A549 (cell line): ENCODE measurements at regions of chr10 and their contacts with region 1.

Region 1: GRCh38 chr10:62038609-62039190 is 137.2 kb downstream of the ARID5B start:
- DNase-seq: peak; percentile 74 to 79
- ATAC-seq: peak; percentile 79 to 90; a peak in 5 of 6 replicates
- H3K4me3 ChIP-seq: no peak overlapping the region
- H3K27ac ChIP-seq: peak overlapping the region; percentile 51 to 70
- H3K4me1 ChIP-seq: peaks cover 30% of the 10 kb centered on the region
- CTCF ChIP-seq: peak; percentile 86
- EP300 ChIP-seq: no peak
- POLR2A ChIP-seq: no peak
- RAD21 ChIP-seq: peak; percentile 96 to 98

Region 2: GRCh38 chr10:61812052-61812721 is 226.5 kb before region 1 on chr10:
- CTCF ChIA-PET with region 1: no interaction called
- POLR2A ChIA-PET with region 1: no interaction called
- DNase-seq: no peak
- ATAC-seq: no peak
- H3K4me3 ChIP-seq: no peak overlapping the region
- H3K27ac ChIP-seq: no peak overlapping the region
- H3K4me1 ChIP-seq: no peaks in the 10 kb centered on the region
- CTCF ChIP-seq: no peak
- EP300 ChIP-seq: no peak
- POLR2A ChIP-seq: no peak
- RAD21 ChIP-seq: no peak

Region 3: DNA sequence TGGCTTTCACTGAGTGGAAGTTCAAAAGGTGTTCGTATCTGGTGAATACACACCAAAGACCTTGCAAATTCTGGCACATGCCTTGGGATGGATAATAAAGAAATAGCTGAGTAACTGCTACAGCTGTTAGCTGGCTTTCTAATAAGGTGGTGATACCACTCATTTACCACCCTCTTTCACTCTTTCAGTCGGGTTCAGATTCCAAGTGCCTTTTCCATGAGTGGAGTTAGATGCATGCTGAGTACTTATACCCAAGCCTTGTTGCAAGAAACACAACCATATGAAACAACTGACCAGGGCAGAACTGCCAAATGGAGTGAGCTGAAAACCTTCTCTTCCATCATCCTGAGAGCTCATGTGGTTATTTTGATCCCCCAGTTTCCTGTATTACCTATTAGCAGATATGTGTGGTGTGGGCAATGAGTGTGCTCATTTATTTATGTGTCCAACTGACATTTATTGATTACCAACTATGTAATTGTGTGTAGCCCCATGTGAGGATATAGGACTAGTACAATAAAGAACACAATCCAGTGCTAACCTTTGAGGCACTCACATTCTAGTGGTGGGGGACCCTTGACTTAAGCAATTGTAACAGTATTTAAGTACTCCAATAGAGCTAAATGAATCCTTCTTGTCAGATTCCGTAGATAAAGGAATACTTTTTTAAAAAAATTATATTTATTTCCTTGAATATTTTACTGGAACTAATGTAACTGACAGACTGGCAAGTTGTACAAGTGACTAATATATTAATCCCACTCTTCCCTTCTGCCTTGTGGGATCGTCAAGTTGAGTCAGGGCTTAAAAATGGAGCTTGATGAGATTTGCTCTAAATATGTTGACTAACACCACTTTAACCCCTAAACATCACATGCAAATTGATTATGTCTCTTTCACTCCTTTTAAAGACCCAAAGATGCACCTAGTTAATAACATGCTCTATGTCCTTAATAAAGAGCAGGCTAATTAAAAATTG is 12.5 kb before region 1 on chr10:
- CTCF ChIA-PET with region 1: interaction called, 32 read pairs
- POLR2A ChIA-PET with region 1: interaction called, 7 read pairs
- DNase-seq: no peak
- ATAC-seq: no peak
- H3K4me3 ChIP-seq: no peak overlapping the region
- H3K27ac ChIP-seq: no peak overlapping the region
- H3K4me1 ChIP-seq: peaks cover 8% of the 10 kb centered on the region; the same call in 2 of the 3 replicates
- CTCF ChIP-seq: no peak
- EP300 ChIP-seq: no peak
- POLR2A ChIP-seq: no peak
- RAD21 ChIP-seq: no peak

Region 4: DNA sequence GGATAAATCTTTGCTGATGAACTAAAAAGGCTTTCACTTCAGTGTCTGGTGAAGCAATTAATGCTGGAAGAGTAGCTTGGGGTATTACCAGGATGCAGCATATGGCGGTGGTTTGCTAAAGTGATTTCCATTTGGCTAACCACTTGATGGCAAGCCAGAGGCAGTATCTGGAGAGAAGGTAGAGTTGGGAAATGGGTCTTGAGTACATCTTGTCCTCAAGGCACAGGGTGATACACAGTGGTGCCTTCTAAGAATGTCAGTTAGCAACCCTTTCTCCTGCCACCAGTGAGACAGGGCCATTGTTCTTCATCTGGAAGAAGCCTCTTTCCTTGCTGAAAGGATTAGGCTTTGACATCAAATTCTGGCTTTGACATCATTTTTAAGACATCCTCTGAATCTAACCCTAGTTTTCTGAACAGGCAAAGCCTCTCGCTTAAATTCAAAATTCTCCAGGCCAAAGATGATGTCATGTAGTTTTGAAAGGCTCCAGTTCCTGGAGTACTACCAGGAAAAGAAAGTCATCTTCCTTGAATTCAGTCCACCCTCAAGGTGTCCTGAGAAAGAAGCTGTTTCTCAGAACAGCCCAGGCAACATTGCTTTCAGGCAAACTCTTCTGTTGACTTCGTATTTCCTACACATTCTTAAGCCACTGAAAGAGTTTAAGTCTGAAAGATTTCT is 25.2 kb after region 1 on chr10:
- CTCF ChIA-PET with region 1: interaction called, 10 read pairs
- POLR2A ChIA-PET with region 1: no interaction called
- DNase-seq: no peak
- ATAC-seq: no peak
- H3K4me3 ChIP-seq: no peak overlapping the region
- H3K27ac ChIP-seq: no peak overlapping the region; a peak in 1 of 6 replicates
- H3K4me1 ChIP-seq: peaks cover 11% of the 10 kb centered on the region; the same call in 1 of the 3 replicates
- CTCF ChIP-seq: no peak
- EP300 ChIP-seq: no peak
- POLR2A ChIP-seq: no peak
- RAD21 ChIP-seq: no peak

Region 5: GRCh38 chr10:62103857-62104256 is 65.2 kb after region 1 on chr10:
- CTCF ChIA-PET with region 1: interaction called, 13 read pairs
- POLR2A ChIA-PET with region 1: no interaction called
- DNase-seq: no peak
- ATAC-seq: no peak
- H3K4me3 ChIP-seq: no peak overlapping the region
- H3K27ac ChIP-seq: no peak overlapping the region
- H3K4me1 ChIP-seq: 0 out of 3 replicates have a peak, but pooled peaks cover under 1% of the 10 kb centered on the region
- CTCF ChIP-seq: no peak
- EP300 ChIP-seq: no peak
- POLR2A ChIP-seq: no peak
- RAD21 ChIP-seq: no peak

Region 6: DNA sequence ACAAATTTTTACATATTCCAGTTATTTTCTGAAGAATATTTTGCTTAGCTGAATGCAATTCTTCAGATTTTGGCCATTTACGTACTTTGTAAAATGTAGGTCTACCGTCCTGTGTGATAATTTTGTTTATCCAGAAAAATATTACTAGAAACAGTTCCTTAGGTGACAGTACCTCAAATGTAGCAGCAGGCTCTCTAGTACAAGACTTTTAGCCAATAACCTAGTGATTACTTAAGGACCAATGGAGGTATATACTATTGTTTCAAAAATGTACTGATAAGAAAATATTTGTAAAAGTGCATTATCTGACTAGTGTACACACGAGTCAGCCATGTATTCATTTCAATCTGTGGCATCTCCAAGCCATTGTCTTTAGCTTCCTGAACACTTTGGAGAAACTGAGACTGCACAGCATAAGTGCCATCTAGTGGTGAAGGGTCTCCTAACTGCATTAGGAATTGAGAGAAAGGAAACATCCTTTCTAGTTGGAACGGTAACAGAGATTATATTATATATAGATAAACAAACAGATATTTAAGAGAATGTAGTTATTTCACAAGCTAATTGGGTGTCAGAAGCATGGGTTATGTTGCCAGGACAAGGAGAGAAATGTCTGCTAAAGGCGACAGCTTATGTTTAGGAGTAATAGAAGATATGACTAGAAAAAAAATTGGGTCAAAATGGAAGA is 206.2 kb after region 1 on chr10:
- CTCF ChIA-PET with region 1: interaction called, 221 read pairs
- POLR2A ChIA-PET with region 1: interaction called, 3 read pairs
- DNase-seq: peak in 1 of 2 experiments; percentile 67
- ATAC-seq: peak; percentile 74 to 87
- H3K4me3 ChIP-seq: no peak overlapping the region
- H3K27ac ChIP-seq: peak overlapping the region; percentile 71 to 74; a peak in 5 of 6 replicates
- H3K4me1 ChIP-seq: peaks cover 41% of the 10 kb centered on the region
- CTCF ChIP-seq: peak; percentile 91
- EP300 ChIP-seq: no peak
- POLR2A ChIP-seq: no peak
- RAD21 ChIP-seq: peak; percentile 94 to 97